Activated B cell treated with CpG ODN at 0.5 μM for 24 hours (primary cell): ENCODE measurements at regions of chr2 and their contacts with region 1.

Region 1: DNA sequence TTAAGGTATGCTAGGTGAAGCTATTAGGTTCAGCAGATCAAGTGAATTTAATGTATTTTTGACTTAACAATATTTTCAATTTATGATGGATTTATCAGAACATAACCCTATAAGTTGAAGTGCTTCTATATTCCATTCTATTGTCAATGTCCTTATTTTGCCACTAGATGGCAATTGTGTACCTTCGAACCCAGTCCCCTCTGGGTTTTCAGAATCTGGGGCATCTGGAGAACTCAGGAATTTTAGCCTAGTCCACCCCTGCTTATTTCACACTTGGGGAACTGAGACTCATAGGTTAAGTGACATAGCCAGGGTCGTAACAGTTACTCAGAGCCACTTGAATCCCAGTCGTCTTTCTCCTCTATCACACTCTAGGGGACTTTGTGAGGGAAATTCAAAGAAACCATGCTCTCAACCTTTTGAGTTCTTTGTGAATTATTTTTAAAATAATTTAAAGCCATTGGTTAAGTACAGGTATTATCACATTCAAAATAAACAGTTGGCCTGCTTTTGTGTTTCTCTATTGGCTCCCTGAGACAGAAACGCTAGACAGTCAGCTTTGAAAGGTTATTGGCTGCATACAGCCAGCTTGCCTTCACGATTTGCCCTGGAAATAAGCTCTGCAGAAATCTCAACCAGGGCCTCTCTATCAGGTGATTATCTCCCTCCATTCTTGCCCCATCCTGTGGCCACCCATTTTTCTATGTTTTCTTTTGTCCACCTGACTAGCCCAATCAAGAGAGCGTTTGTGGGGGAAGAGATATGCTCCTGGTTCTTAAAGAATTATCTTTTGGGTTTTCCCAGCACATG is 145.0 kb downstream of the TTC27 start:
- DNase-seq: no peak
- ATAC-seq: no peak
- H3K4me3 Mint-ChIP-seq: no peak overlapping the region
- H3K27ac Mint-ChIP-seq: no peak overlapping the region
- H3K4me1 Mint-ChIP-seq: no peaks in the 10 kb centered on the region
- H3K27me3 Mint-ChIP-seq: no peaks in the 10 kb centered on the region
- CTCF ChIP-seq: no peak

Region 2: DNA sequence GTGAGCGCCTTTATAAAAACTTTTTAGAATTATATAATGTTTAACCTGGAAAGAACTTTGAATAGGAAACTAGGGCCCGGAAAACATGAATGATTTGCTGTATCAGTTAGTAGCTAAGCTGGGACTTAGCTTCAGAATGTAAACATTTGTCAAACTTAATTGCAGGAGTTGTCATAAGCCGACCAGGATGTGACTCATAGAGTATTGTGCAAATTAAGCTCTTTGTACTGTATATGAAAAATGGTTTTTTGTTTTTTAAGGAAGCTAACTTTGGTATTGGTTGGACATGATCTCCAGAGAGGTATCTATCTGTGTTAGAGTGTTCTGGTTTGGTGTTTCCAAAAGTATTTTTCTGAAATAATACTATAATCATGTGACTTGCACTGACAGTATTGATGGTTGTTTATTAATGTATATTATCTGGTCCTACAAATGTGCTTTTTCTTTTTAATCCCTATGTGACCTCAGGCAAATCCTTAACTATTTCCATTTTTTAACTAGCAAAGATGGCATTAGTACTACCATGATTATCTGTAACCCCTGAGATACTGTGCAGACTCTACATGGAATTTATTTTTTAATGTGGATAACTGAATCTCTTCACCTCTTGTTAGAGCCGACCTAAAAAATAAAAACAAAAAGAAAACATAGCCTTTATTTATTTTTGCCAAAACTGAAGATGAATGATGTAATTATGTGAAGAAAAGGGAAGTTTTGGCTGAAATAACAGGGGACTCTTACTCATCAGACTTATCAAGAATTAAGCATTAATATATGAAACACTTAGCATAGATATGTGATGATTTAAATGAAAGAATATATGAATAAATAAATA is 483.5 kb before region 1 on chr2:
- CTCF ChIA-PET with region 1: no interaction called
- POLR2A ChIA-PET with region 1: no interaction called
- intact Hi-C with region 1: no loop called
- DNase-seq: no peak
- ATAC-seq: no peak
- H3K4me3 Mint-ChIP-seq: no peak overlapping the region
- H3K27ac Mint-ChIP-seq: no peak overlapping the region
- H3K4me1 Mint-ChIP-seq: peaks cover 25% of the 10 kb centered on the region
- H3K27me3 Mint-ChIP-seq: no peaks in the 10 kb centered on the region
- CTCF ChIP-seq: no peak

Region 3: GRCh38 chr2:32697156-32697555 is 75.7 kb before region 1 on chr2:
- CTCF ChIA-PET with region 1: no interaction called
- POLR2A ChIA-PET with region 1: no interaction called
- intact Hi-C with region 1: no loop called
- DNase-seq: no peak
- ATAC-seq: no peak
- H3K4me3 Mint-ChIP-seq: no peak overlapping the region
- H3K27ac Mint-ChIP-seq: no peak overlapping the region
- H3K4me1 Mint-ChIP-seq: no peaks in the 10 kb centered on the region
- H3K27me3 Mint-ChIP-seq: no peaks in the 10 kb centered on the region
- CTCF ChIP-seq: no peak

Region 4: DNA sequence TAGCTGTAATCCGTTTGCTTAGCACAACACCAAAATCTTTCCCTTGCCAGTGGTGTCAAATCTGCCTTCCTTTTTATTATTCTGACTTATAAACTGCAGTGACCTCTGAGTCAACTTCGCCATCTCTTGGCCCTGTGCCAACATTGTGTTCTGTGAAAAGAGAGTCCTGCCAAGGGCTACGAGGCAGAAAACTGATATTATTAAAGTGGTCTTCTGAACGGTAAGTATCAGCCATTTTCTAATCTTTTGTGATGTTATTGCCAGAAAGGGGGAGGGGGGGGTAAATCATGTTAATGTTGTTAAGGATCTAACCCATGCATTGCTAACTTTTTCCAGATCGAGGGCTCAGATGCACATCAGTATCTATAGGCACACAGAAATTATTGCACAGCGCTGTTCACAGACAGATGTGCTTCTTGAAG is 52.5 kb after region 1 on chr2:
- CTCF ChIA-PET with region 1: no interaction called
- POLR2A ChIA-PET with region 1: no interaction called
- intact Hi-C with region 1: no loop called
- DNase-seq: no peak
- ATAC-seq: no peak
- H3K4me3 Mint-ChIP-seq: no peak overlapping the region
- H3K27ac Mint-ChIP-seq: no peak overlapping the region
- H3K4me1 Mint-ChIP-seq: peaks cover 4% of the 10 kb centered on the region
- H3K27me3 Mint-ChIP-seq: no peaks in the 10 kb centered on the region
- CTCF ChIP-seq: no peak

Region 5: GRCh38 chr2:33395655-33396249 is 622.9 kb after region 1 on chr2:
- CTCF ChIA-PET with region 1: no interaction called
- POLR2A ChIA-PET with region 1: no interaction called
- intact Hi-C with region 1: loop called (anchors 2 kb)
- DNase-seq: no peak
- ATAC-seq: no peak
- H3K4me3 Mint-ChIP-seq: no peak overlapping the region
- H3K27ac Mint-ChIP-seq: no peak overlapping the region
- H3K4me1 Mint-ChIP-seq: no peaks in the 10 kb centered on the region
- H3K27me3 Mint-ChIP-seq: no peaks in the 10 kb centered on the region
- CTCF ChIP-seq: no peak